Ovary (tissue), 10 donors: ENCODE measurements at regions of chr17 and their contacts with region 1.

Region 1: DNA sequence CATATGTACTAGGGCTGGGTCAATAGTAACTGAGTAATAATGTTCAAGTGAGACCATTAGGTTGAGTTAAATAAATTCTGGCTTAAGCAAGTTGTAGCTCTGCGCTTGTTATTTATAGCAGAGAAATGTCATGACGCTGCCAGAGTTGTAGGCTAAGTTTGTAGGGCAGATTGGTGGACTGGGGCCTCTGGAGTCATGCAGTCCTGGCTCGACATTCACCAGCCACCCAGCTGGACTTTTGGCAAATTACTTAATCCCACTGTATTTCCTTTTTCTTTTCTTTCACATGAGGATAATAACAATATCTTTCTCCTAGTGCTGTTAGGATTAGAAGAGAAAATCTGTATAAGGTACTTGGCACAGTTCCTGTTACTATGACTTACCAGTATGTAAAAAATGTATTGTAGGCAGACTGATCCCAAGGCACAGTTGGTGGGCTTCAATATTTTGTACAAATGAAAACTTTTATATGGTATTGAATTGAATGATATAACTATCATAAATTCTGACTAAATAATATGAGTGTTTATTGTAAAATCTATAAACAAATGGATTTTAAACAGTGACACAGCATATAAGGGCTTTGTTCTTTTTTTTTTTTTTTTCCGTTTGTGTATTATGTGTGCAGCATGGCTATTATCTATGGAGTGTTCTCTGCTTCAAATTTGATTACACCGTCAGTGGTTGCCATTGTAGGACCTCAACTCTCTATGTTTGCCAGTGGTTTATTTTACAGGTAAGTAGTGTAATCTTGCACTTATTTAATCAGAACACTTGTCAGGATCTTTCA is 2.6 kb downstream of the MFSD11 start:
- DNase-seq: no peak
- H3K4me3 ChIP-seq: no peak overlapping the region
- H3K27ac ChIP-seq: no peak overlapping the region
- H3K4me1 ChIP-seq: no peaks in the 10 kb centered on the region
- H3K27me3 ChIP-seq: no peaks in the 10 kb centered on the region
- CTCF ChIP-seq: no peak
- EP300 ChIP-seq: no peak
- POLR2A ChIP-seq: no peak

Region 2: GRCh38 chr17:76816590-76817135 is 76.1 kb after region 1 on chr17:
- intact Hi-C with region 1: no loop called
- DNase-seq: no peak
- H3K4me3 ChIP-seq: no peak overlapping the region
- H3K27ac ChIP-seq: no peak overlapping the region
- H3K4me1 ChIP-seq: no peaks in the 10 kb centered on the region
- H3K27me3 ChIP-seq: no peaks in the 10 kb centered on the region
- CTCF ChIP-seq: no peak
- EP300 ChIP-seq: no peak
- POLR2A ChIP-seq: no peak

Region 3: DNA sequence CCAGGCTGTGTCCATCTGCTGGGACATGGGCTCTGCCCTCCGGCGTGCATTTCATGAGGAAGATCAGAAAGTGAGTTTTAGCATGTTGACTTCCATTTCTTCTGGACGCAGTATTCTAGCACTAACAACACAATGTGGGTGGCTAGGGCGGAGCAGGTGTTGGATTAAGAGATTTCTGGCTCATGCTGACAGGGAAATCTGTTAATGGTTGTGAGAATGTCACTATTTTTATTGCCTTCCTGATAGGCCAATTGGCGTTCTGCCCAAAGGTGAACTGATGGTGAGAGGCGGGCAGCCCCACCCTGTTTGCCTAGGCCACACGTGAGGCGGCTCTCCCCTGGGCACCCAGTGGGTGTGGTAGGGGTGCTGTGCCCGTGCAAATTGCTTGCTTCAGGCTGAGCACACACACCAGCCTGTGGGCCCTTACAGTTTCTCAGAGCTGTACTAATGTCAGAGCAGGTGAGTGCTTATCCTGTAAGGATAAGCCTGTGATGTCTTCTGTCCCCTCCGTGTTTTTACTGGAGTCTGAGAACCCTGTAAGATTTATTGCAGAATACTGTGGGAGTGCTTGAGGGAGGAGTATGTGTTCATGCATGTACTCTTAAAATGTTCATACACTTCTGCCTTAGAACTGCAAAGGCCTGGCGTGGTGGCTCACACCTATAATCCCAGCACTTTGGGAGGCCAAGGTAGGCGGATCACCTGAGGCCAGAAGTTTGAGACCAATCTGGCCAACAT is 1668.8 kb after region 1 on chr17:
- intact Hi-C with region 1: loop called in 1 of 4 experiments (anchors 10 kb)
- DNase-seq: no peak
- H3K4me3 ChIP-seq: no peak overlapping the region
- H3K27ac ChIP-seq: no peak overlapping the region
- H3K4me1 ChIP-seq: no peaks in the 10 kb centered on the region
- H3K27me3 ChIP-seq: no peaks in the 10 kb centered on the region
- CTCF ChIP-seq: no peak
- EP300 ChIP-seq: no peak
- POLR2A ChIP-seq: no peak